K562 (cell line): ENCODE measurements at regions of chr22 and their contacts with region 1.

Region 1: GRCh38 chr22:24423519-24424000 is 3.8 kb upstream of the ADORA2A start:
- DNase-seq: peak; percentile 61 to 88 (median 84)
- ATAC-seq: peak; percentile 86
- H3K4me3 ChIP-seq: peak overlapping the region; percentile 42
- H3K27ac ChIP-seq: no peak overlapping the region
- H3K4me1 ChIP-seq: peaks cover 0 to 40% of the 10 kb centered on the region in 2 experiments; a peak in 2 of 5 replicates
- H3K27me3 ChIP-seq: peaks cover 2 to 32% of the 10 kb centered on the region in 2 experiments; a peak in 4 of 5 replicates
- CTCF ChIP-seq: peak; percentile 50 to 82 (median 61); a peak in 5 of 6 replicates
- EP300 ChIP-seq: no peak
- POLR2A ChIP-seq: no peak
- RAD21 ChIP-seq: peak; percentile 57 to 73

Region 2: GRCh38 chr22:24486501-24486921 is 63.0 kb after region 1 on chr22:
- CTCF ChIA-PET with region 1: no interaction called
- POLR2A ChIA-PET with region 1: no interaction called
- in situ Hi-C with region 1: no loop called
- intact Hi-C with region 1: loop called (anchors 5 kb)
- DNase-seq: no peak
- ATAC-seq: no peak
- H3K4me3 ChIP-seq: no peak overlapping the region
- H3K27ac ChIP-seq: no peak overlapping the region
- H3K4me1 ChIP-seq: no peaks in the 10 kb centered on the region; a peak in 2 of 5 replicates
- H3K27me3 ChIP-seq: no peaks in the 10 kb centered on the region
- CTCF ChIP-seq: no peak
- EP300 ChIP-seq: no peak
- POLR2A ChIP-seq: no peak
- RAD21 ChIP-seq: no peak

Region 3: GRCh38 chr22:24503137-24503842 is 79.7 kb after region 1 on chr22:
- CTCF ChIA-PET with region 1: interaction called, 16 read pairs
- POLR2A ChIA-PET with region 1: no interaction called
- in situ Hi-C with region 1: no loop called
- intact Hi-C with region 1: loop called (anchors 5 kb)
- DNase-seq: peak; percentile 63 to 71 (median 66)
- ATAC-seq: peak; percentile 93
- H3K4me3 ChIP-seq: no peak overlapping the region
- H3K27ac ChIP-seq: no peak overlapping the region
- H3K4me1 ChIP-seq: peaks cover 0 to 5% of the 10 kb centered on the region in 2 experiments; a peak in 1 of 5 replicates
- H3K27me3 ChIP-seq: peaks cover 0 to 27% of the 10 kb centered on the region in 2 experiments; a peak in 2 of 5 replicates
- CTCF ChIP-seq: peak; percentile 68 to 81 (median 77)
- EP300 ChIP-seq: no peak
- POLR2A ChIP-seq: no peak
- RAD21 ChIP-seq: peak; percentile 71 to 83